ENCODE measurements at regions of chr2 and their contacts with region 1.

Region 1: DNA sequence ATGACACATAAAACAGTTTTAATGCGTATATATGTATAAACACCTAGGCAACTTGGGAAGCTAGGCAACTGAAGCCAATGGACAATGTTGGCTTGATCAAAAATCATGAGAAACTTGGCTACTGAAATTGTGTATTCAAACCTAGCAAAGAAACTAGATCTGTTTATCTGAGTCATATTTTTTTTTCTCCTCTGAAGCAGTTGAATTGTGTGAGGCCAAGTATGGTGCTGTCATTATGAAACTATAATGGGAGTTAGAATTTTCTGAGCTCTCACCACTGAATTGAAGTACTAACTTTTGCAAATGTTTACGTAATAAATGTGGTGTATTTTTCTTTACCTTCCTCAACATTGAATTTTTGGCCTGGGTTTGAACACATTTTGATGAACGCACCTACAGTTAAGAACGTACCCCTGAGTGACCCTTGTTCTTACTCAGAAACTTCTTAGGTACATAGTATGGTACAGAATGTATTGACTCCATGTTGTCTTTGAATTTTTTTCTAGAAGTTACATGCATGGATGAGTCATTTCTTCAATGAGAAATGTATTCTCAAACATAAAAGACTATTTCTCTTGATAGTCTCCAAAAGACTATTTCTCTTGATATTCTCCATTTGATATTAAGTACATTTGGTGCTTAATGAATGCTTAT is 23.8 kb downstream of the CD28 start:
- DNase-seq: peak; percentile 71
- H3K4me3 Mint-ChIP-seq: peak overlapping the region; percentile 71
- H3K27ac Mint-ChIP-seq: peak overlapping the region; percentile 96
- H3K4me1 Mint-ChIP-seq: peaks cover 79% of the 10 kb centered on the region
- H3K27me3 Mint-ChIP-seq: no peaks in the 10 kb centered on the region

Region 2: GRCh38 chr2:203061346-203061745 is 668.9 kb before region 1 on chr2:
- intact Hi-C with region 1: no loop called
- DNase-seq: no peak
- H3K4me3 Mint-ChIP-seq: no peak overlapping the region
- H3K27ac Mint-ChIP-seq: no peak overlapping the region
- H3K4me1 Mint-ChIP-seq: no peaks in the 10 kb centered on the region
- H3K27me3 Mint-ChIP-seq: no peaks in the 10 kb centered on the region

Region 3: DNA sequence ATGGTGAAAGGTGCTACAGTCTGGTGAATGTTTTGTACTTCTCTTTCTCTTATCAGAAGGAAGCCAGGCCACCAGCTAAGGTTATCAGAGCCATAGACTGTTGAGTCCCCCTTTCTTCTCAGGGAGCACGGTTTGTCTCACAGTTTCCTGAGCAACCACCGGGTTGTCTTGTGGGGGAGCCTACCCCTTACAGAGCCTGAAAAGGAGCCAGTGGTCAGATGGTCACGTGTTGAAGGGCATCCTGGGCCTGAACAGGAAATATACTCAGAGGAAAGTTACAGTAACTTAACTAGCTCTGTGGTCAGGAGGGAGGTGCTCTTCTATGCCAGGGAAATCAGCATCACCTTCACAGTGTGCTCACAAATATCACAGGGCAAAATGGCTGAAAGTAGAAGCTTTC is 12.1 kb before region 1 on chr2:
- intact Hi-C with region 1: loop called (anchors 1 kb)
- DNase-seq: peak; percentile 92
- H3K4me3 Mint-ChIP-seq: peak overlapping the region; percentile 66
- H3K27ac Mint-ChIP-seq: peak overlapping the region; percentile 99
- H3K4me1 Mint-ChIP-seq: peaks cover 91% of the 10 kb centered on the region
- H3K27me3 Mint-ChIP-seq: no peaks in the 10 kb centered on the region

Region 4: DNA sequence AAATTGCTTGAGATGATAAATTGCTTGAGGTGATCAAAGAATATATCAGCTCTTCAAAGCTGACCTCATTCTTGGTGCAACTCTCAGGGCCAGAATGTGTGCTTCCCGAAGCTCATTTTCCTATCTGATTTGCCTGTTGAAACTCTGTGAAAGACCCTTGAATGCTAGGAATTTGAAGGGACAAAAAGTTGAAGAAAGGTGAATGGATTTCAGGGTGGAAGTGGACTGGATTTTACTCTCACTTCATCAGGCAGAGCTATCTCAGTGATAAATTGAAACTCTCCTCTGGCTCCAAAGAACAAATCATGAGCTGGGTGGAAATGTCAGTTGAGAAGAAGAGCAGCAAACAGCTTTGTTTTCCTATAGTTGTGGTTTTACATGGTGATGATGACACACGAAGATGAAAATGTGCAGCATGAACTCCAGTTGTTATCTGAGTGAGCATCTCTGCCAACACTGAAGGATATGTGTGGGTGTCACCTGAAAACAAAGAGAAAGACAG is 10.6 kb after region 1 on chr2:
- intact Hi-C with region 1: loop called (anchors 1 kb)
- DNase-seq: peak; percentile 89
- H3K4me3 Mint-ChIP-seq: peak overlapping the region; percentile 69
- H3K27ac Mint-ChIP-seq: peak overlapping the region; percentile 96
- H3K4me1 Mint-ChIP-seq: peaks cover 72% of the 10 kb centered on the region
- H3K27me3 Mint-ChIP-seq: no peaks in the 10 kb centered on the region

Region 5: GRCh38 chr2:203751685-203752271 is 21.6 kb after region 1 on chr2:
- intact Hi-C with region 1: no loop called
- DNase-seq: no peak
- H3K4me3 Mint-ChIP-seq: no peak overlapping the region
- H3K27ac Mint-ChIP-seq: peak overlapping the region; percentile 35
- H3K4me1 Mint-ChIP-seq: peaks cover 35% of the 10 kb centered on the region
- H3K27me3 Mint-ChIP-seq: no peaks in the 10 kb centered on the region

Region 6: GRCh38 chr2:203804070-203804469 is 73.9 kb after region 1 on chr2:
- intact Hi-C with region 1: loop called (anchors 5 kb)
- DNase-seq: peak; percentile 82
- H3K4me3 Mint-ChIP-seq: peak overlapping the region; percentile 40
- H3K27ac Mint-ChIP-seq: peak overlapping the region; percentile 84
- H3K4me1 Mint-ChIP-seq: peaks cover 60% of the 10 kb centered on the region
- H3K27me3 Mint-ChIP-seq: no peaks in the 10 kb centered on the region

Region 7: DNA sequence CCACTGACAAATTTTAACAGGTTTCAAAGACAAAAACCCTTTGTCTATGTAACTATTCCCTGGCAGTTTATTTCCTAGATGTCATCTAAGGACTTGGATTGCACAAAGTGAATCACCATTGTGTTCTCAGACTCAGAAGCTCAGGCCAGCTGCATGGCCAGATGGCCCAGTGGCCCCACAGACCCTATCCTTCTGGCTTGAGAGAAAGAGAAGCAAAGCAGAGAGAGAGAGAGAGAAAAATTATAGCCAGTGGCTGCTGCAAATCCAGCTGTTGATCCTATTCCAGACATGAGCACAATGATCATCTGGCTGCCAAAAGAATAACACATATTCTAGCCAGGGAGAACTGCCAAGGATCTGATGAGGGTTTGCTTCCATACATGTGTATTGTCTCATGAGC is 163.2 kb after region 1 on chr2:
- intact Hi-C with region 1: loop called (anchors 2 kb)
- DNase-seq: no peak
- H3K4me3 Mint-ChIP-seq: peak overlapping the region; percentile 21
- H3K27ac Mint-ChIP-seq: peak overlapping the region; percentile 62
- H3K4me1 Mint-ChIP-seq: peaks cover 65% of the 10 kb centered on the region
- H3K27me3 Mint-ChIP-seq: no peaks in the 10 kb centered on the region